Colonic mucosa (tissue), 4 donors: ENCODE measurements at regions of chr5 and their contacts with region 1.

Region 1: DNA sequence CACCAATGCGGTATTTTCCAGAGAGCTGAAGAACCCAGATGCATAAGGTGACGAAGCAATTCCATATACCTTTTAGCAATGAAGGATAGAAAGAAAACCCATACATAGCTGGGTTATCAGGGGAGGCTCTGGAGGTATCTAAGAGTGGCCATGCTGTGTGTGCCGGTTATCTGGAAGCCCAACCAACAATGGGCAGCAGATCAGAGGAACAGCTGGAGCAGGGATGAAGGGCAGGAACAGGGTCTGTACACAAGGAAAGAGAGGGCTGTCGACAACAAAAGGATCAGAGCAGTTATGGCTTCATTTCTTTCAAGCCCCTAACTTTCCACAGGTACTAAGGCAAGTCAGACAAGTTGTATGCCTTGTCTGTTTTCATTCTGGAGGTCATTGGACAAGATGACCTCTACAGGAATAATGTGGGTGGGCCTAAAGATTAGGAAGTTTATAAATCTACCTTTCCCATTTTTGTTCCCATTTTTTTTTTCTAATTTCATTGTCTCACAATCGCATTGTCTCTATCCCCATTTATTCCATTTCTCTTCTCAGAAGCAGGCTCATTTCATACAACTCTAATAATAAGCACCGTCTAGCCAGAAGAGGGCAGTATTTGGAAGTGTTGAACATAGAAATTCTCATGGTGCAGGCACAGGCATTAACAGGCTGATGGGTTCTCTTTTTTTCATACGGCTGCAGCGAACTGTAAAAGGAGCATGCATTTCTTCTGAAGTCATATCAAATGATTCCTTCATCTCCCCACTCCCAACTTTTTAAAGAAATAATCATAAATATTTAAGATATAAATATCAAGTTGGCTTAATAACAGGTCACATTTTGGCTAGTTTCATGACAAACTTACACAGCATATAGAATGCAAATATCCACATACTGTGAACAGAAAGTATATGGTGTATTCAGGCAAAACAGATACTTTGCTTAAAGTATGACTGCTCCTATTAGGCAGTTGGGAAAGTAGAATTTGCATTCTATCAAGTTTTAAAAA is 63.5 kb downstream of the ZNF474 start:
- DNase-seq: peak; percentile 58
- H3K4me3 ChIP-seq: no peak overlapping the region
- H3K27ac ChIP-seq: no peak overlapping the region
- H3K4me1 ChIP-seq: peaks cover 3% of the 10 kb centered on the region
- H3K27me3 ChIP-seq: no peaks in the 10 kb centered on the region
- CTCF ChIP-seq: peak; percentile 58

Region 2: DNA sequence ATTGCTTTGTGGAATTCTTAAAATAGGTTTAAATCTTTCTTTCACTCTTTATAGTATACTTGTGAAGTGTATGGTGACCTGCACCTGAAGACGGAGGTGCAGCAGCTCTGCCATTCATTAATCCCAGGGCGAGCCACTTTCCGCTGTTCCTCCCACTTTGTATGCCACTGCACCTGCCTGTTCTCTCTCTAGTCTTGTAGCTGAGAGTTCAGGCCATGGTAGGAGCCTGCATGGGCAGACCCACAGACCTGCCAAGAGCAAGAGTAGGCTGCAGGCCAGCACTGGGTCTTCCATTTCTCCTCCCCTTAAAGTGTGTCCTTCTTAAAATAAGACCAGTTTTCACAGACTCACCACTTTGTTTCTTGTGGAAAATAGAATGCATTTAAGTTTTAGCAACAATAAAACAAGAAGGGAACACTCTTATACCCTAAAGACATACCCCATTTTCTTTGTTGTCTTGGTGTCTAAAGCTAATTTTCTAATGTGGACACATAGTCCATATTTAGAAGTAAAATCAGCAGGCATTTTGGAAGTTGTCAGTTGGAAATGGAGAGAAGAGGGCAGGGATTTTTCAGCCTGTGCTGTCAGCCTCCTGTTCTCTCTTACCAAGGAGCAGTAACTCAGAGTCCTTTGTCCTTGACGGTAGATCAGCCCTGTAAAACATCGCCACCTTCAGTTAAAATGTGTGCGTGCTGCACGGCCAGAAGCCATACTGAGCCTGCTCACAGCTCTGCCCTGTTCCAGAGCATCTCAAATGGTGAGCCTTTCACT is 222.4 kb after region 1 on chr5:
- intact Hi-C with region 1: loop called (anchors 5 kb)
- DNase-seq: peak; percentile 57
- H3K4me3 ChIP-seq: no peak overlapping the region
- H3K27ac ChIP-seq: no peak overlapping the region
- H3K4me1 ChIP-seq: no peaks in the 10 kb centered on the region
- H3K27me3 ChIP-seq: no peaks in the 10 kb centered on the region
- CTCF ChIP-seq: peak; percentile 70

Region 3: GRCh38 chr5:122492664-122493063 is 299.9 kb after region 1 on chr5:
- intact Hi-C with region 1: loop called (anchors 5 kb)
- DNase-seq: no peak
- H3K4me3 ChIP-seq: no peak overlapping the region
- H3K27ac ChIP-seq: no peak overlapping the region
- H3K4me1 ChIP-seq: no peaks in the 10 kb centered on the region
- H3K27me3 ChIP-seq: no peaks in the 10 kb centered on the region
- CTCF ChIP-seq: peak; percentile 24